AG04449 (cell line): ENCODE measurements at regions of chr1 and their contacts with region 1.

Region 1: GRCh38 chr1:152001391-152002249 is 8.0 kb upstream of the S100A10 start:
- DNase-seq: peak; percentile 96
- H3K4me3 ChIP-seq: no peak overlapping the region
- CTCF ChIP-seq: peak; percentile 80

Region 2: DNA sequence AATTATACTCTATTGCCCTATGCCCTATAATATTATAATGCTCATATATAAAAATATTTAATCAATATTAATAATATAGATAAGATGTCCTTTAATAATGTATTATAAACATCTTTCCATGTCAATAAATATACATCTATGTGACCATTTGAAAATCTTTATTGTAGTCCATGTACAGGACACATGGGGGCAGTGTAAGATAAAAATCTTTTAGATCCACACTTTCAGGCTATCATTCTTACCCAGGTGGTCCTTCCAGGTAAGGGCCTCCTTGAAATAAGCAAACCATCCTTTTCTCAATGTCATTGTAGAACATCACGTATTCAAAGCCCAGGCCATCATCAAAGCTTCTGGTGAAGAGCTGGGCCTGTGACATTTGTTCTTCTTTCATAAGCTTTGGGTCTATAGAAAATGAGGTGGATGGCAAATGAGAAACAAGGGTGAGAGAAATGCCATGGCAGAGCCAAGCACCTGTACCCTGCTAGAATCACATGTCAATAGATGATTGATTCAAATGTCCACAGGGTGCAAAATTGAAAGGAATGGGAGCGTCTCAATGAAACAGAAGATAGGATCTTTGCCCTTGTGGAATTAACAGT is 112.5 kb before region 1 on chr1:
- CTCF ChIA-PET with region 1: interaction called, 47 read pairs
- POLR2A ChIA-PET with region 1: no interaction called
- DNase-seq: no peak
- H3K4me3 ChIP-seq: no peak overlapping the region
- CTCF ChIP-seq: peak; percentile 19

Region 3: DNA sequence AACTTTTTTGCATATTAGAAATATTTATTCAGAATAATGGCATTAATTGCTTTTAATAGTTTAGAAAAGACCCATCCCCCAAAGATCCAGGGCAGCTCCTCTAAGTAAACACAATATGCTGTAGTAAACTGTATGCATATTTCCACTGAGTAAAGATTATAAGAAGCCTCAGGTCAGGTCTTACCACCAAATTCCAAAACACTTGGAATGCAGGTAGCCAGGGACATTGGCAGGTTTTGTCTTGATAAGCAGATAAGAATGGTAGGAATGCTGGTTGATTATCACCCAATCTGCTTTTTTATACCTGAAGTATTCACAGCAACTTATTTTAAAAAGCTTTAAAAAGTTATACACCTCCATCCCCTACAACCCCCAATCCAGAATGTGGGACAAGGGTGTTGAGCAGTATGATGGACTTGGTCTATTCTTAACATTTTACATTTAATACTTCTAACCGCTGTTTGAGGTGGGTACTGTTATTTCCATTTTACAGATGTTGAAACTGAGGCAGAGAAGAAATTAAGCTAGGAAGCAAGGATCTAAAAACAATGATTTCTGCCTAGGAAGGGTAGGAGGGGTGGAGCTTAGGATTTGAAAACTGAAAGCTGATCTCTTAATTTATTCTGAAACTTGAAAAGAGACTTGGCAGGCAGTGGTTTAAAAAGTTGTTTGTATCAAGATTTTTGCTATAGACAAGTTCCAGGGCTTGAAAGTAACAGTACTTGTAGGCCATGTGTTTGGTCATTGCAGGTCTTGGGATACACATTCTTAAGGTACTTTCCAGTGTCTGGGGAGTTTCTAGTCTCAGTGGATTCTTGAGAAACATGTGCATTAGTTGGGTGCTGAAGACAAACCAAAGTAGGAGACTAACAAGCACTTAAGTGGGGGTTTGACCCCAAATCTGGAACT is 76.7 kb before region 1 on chr1:
- CTCF ChIA-PET with region 1: interaction called, 605 read pairs
- POLR2A ChIA-PET with region 1: no interaction called
- DNase-seq: no peak
- H3K4me3 ChIP-seq: no peak overlapping the region
- CTCF ChIP-seq: no peak

Region 4: DNA sequence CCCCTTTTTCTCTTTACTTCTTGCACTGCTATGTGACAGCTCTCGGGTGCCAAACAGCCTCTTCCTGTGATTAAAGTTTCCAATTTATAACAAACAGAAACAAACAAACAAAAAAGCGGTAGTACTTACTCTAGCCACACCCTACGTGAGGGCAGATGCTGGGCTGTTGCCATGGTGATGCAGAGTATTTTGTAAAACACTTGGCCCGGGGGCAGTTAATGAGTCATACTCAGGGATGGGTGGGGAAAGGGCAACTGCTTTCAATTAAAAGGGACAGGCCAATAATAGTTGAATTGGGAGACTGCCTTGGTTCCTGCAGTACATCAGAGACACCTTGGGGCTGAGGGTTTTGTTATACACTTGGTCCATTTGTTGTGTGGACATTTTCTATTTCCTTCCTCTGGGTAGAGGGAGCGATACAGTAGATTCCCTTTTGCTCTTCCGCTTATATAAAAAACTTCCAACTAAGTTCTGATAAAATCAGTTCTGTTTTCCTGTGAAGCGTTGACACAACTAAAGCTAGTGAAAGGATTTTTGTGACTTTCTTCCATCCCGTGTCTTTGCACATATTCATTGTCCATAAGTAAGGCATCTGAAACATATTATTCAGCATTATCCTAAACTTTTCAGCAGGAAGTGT is 55.8 kb before region 1 on chr1:
- CTCF ChIA-PET with region 1: interaction called, 605 read pairs
- POLR2A ChIA-PET with region 1: no interaction called
- DNase-seq: peak; percentile 62
- H3K4me3 ChIP-seq: no peak overlapping the region
- CTCF ChIP-seq: no peak

Region 5: GRCh38 chr1:151980287-151981177 is 21.1 kb before region 1 on chr1:
- CTCF ChIA-PET with region 1: interaction called, 120 read pairs
- POLR2A ChIA-PET with region 1: interaction called, 3 read pairs
- DNase-seq: peak; percentile 84
- H3K4me3 ChIP-seq: no peak overlapping the region
- CTCF ChIP-seq: no peak

Region 6: DNA sequence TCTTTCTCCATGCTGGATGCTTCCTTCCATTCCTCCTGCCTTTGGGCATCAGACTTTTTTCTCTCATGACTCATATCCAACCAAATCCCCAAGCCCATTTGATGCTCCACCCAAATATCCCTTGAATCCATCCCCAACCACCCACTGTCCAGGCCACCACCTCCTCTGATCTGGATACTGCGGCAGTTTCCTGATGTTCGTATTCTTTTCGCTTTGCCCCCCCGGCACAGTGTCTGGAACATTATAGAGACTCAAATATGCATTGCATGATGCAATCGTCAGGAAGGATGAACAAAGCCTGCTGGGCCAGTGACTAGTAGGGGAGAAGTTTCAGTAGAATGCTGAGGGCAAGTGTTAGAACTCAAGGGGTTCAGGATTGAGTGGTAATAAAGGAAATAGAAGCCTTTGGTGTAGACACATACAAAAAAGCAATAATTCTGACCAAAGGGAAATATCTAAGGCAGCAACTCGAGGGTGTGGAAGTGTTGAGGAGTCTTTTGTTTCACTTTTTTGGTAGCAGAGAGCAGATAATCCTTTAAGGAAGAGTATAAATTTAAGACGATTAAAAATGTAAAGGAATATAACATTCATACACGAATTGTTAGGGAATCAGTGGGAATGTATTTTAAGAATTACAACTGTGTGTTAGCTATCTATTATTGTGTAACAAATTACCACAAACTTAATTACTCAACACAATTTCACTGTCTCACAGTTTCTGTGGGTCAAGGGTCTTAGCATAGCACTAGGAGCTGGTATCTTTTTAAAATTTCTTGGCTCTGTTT is 27.7 kb after region 1 on chr1:
- CTCF ChIA-PET with region 1: interaction called, 36 read pairs
- POLR2A ChIA-PET with region 1: interaction called, 3 read pairs
- DNase-seq: no peak
- H3K4me3 ChIP-seq: no peak overlapping the region
- CTCF ChIP-seq: no peak

Region 7: DNA sequence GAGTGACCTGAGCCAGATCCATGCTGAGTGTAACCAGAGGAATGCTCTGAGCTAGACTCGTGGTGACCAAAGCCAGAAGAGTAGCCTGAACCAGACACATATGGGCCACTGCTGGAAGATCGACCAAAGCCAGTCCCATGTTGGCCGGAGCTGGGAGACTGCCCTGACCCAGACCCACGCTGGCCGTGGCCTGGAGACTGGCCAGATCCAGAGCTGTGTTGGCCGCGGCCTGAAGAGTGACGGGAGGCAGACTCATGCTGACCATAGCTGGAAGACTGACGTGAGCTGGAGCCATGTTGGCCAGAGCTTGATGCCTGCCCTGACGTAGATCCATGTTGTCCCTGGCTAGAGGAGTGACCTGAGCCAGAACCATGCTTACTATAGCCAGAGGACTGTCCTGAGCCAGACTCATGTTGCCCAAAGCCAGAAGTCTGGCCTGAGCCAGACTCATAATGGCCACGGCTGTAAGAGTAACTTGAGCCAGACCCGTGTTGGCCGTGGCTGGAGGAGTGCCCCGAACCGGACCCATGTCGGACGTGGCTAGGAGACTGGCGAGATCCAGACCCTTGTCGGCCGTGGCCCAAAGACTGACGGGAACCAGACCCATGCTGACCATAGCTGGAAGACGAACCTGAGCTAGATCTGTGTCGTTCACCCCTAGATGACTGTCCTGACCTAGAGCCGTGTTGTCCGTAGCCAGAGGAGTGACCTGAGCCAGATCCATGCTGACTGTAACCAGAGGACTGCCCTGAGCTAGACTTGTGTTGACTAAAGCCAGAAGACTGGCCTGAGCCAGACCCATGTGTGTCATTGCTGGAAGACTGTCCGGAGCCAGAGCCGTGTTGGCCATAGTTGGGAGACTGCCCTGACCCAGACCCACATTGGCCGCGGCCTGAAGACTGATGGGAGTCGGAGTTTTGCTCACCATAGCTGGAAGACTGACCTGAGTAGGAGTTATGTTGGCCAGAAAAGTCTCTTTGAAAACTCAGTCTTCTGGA is 218.8 kb after region 1 on chr1:
- CTCF ChIA-PET with region 1: no interaction called
- POLR2A ChIA-PET with region 1: no interaction called
- DNase-seq: no peak
- H3K4me3 ChIP-seq: no peak overlapping the region
- CTCF ChIP-seq: no peak